ENCODE measurements at regions of chr2 and their contacts with region 1.

Region 1: DNA sequence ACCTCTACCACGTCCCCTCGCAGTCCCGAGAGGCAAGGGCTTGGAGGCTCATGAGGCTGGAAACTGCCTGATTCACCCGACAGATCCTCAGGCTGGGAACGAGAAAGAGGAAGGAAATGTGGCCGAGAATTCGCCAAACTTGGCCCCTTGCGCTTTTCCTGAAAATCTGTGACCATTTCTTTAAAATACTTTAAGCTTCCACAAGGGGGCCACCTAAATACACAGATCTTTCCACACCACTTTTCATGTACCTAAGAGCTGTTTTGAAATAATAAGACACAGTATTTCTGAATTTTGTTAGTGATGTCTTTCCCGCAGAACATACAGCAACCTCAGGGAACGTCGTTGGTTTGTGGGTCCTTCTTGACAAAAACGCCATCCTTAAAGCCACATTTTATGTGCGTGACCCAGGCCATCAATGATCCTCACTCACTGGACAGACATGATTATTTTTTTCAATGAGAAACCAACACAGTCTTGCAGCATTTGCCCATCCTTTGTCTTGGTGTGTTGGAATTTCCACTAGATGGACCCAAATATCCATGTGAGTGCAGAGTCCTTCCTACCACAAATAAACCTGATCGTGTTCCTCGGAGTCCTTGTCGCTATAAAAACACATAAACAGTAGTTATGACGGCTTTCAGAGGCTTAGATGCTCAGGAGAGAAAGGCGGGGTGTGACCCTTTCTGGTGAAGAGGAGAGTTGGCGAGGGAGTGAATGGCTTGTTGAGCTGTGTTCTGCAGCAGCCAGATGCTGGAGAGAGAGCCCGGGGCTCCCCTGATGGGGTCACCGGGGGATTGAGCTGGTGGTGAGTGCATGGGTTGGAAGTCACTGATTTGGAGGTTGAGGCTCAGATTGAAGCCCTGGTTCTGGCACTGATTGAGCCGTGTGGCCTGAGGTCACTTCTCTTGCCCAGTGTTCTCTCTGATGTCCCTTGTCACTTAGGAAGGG is 25.0 kb downstream of the DCDC2C start:
- DNase-seq: peak; percentile 7
- H3K4me3 Mint-ChIP-seq: no peak overlapping the region
- H3K27ac Mint-ChIP-seq: no peak overlapping the region
- H3K4me1 Mint-ChIP-seq: no peaks in the 10 kb centered on the region
- H3K27me3 Mint-ChIP-seq: peaks cover 73% of the 10 kb centered on the region
- CTCF ChIP-seq: peak; percentile 59

Region 2: DNA sequence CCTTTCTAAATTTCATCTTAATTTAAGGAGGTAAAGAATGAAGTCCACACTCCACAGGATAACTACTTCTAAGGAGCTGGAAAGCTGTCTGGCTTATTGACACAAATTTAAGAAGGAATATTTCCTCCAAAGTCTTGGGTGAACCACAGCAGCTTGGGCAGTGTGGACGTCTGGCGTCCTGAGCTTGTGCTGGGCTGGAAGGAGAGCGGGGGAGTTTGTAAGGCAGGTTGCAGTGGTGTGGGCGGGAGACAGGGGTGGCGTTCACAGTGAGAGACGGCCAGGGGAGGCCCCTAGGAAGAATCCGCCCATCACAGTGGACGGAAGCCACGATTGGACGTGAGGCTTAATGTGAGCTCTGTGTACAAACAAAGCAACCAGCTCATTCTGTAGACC is 234.8 kb before region 1 on chr2:
- CTCF ChIA-PET with region 1: no interaction called
- intact Hi-C with region 1: no loop called
- DNase-seq: no peak
- H3K4me3 Mint-ChIP-seq: no peak overlapping the region
- H3K27ac Mint-ChIP-seq: peak overlapping the region; percentile 17
- H3K4me1 Mint-ChIP-seq: no peaks in the 10 kb centered on the region
- H3K27me3 Mint-ChIP-seq: no peaks in the 10 kb centered on the region
- CTCF ChIP-seq: no peak

Region 3: GRCh38 chr2:3780477-3781402 is 52.4 kb after region 1 on chr2:
- CTCF ChIA-PET with region 1: interaction called, 13 read pairs
- intact Hi-C with region 1: loop called (anchors 1 kb)
- DNase-seq: peak; percentile 58
- H3K4me3 Mint-ChIP-seq: no peak overlapping the region
- H3K27ac Mint-ChIP-seq: no peak overlapping the region
- H3K4me1 Mint-ChIP-seq: no peaks in the 10 kb centered on the region
- H3K27me3 Mint-ChIP-seq: peaks cover 35% of the 10 kb centered on the region
- CTCF ChIP-seq: no peak

Region 4: GRCh38 chr2:3805201-3805939 is 77.0 kb after region 1 on chr2:
- CTCF ChIA-PET with region 1: interaction called, 11 read pairs
- intact Hi-C with region 1: loop called (anchors 2 kb)
- DNase-seq: peak; percentile 67
- H3K4me3 Mint-ChIP-seq: no peak overlapping the region
- H3K27ac Mint-ChIP-seq: no peak overlapping the region
- H3K4me1 Mint-ChIP-seq: no peaks in the 10 kb centered on the region
- H3K27me3 Mint-ChIP-seq: peaks cover 9% of the 10 kb centered on the region
- CTCF ChIP-seq: no peak

Region 5: GRCh38 chr2:3827673-3828575 is 99.5 kb after region 1 on chr2:
- CTCF ChIA-PET with region 1: interaction called, 4 read pairs
- intact Hi-C with region 1: loop called (anchors 1 kb)
- DNase-seq: peak; percentile 47
- H3K4me3 Mint-ChIP-seq: no peak overlapping the region
- H3K27ac Mint-ChIP-seq: no peak overlapping the region
- H3K4me1 Mint-ChIP-seq: no peaks in the 10 kb centered on the region
- H3K27me3 Mint-ChIP-seq: peaks cover 8% of the 10 kb centered on the region
- CTCF ChIP-seq: no peak